CD8-positive, alpha-beta T cell (primary cell): ENCODE measurements at regions of chr12 and their contacts with region 1.

Region 1: GRCh38 chr12:11040162-11040561 is 9.0 kb upstream of the TAS2R31 start:
- DNase-seq: no peak
- ATAC-seq: no peak
- H3K4me3 ChIP-seq: no peak overlapping the region
- H3K4me3 Mint-ChIP-seq: no peak overlapping the region
- H3K27ac ChIP-seq: no peak overlapping the region
- H3K27ac Mint-ChIP-seq: no peak overlapping the region
- H3K4me1 ChIP-seq: no peaks in the 10 kb centered on the region
- H3K4me1 Mint-ChIP-seq: peaks cover 11% of the 10 kb centered on the region
- H3K27me3 ChIP-seq: no peaks in the 10 kb centered on the region
- H3K27me3 Mint-ChIP-seq: no peaks in the 10 kb centered on the region
- CTCF ChIP-seq: no peak

Region 2: DNA sequence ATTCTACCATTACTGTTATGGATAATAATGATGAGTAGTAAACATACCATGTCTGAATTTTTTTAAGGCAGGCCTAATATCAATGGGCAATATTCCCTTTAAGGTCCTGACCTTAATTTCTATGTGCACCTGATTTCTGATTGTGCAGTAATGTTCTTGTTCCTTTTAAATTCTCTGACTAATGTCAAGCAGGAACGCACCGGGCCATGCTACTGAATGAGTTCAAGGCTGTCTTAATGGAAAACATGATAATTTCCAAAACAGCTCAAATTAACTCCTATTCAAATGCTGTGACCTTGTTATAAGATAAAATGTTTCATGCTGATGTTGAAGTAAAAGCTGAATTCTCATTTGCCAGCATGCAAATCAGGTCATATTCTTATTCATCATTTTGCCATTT is 15.1 kb after region 1 on chr12:
- CTCF ChIA-PET with region 1: no interaction called
- POLR2A ChIA-PET with region 1: no interaction called
- intact Hi-C with region 1: no loop called
- DNase-seq: no peak
- ATAC-seq: no peak
- H3K4me3 ChIP-seq: no peak overlapping the region
- H3K4me3 Mint-ChIP-seq: no peak overlapping the region
- H3K27ac ChIP-seq: no peak overlapping the region
- H3K27ac Mint-ChIP-seq: no peak overlapping the region
- H3K4me1 ChIP-seq: no peaks in the 10 kb centered on the region
- H3K4me1 Mint-ChIP-seq: no peaks in the 10 kb centered on the region
- H3K27me3 ChIP-seq: no peaks in the 10 kb centered on the region
- H3K27me3 Mint-ChIP-seq: no peaks in the 10 kb centered on the region
- CTCF ChIP-seq: no peak

Region 3: GRCh38 chr12:11067514-11067913 is 27.4 kb after region 1 on chr12:
- CTCF ChIA-PET with region 1: no interaction called
- POLR2A ChIA-PET with region 1: no interaction called
- intact Hi-C with region 1: loop called (anchors 1 to 2 kb)
- DNase-seq: no peak
- ATAC-seq: no peak
- H3K4me3 ChIP-seq: no peak overlapping the region
- H3K4me3 Mint-ChIP-seq: no peak overlapping the region
- H3K27ac ChIP-seq: no peak overlapping the region
- H3K27ac Mint-ChIP-seq: no peak overlapping the region
- H3K4me1 ChIP-seq: no peaks in the 10 kb centered on the region
- H3K4me1 Mint-ChIP-seq: peaks cover 14% of the 10 kb centered on the region
- H3K27me3 ChIP-seq: no peaks in the 10 kb centered on the region
- H3K27me3 Mint-ChIP-seq: no peaks in the 10 kb centered on the region
- CTCF ChIP-seq: no peak

Region 4: GRCh38 chr12:11092128-11092527 is 52.0 kb after region 1 on chr12 and contains the start of gene TAS2R43:
- CTCF ChIA-PET with region 1: no interaction called
- POLR2A ChIA-PET with region 1: no interaction called
- intact Hi-C with region 1: loop called (anchors 2 kb)
- DNase-seq: no peak
- ATAC-seq: no peak
- H3K4me3 ChIP-seq: no peak within 1 kb of the TSS
- H3K4me3 Mint-ChIP-seq: no peak within 1 kb of the TSS
- H3K27ac ChIP-seq: no peak within 1 kb of the TSS
- H3K27ac Mint-ChIP-seq: no peak within 1 kb of the TSS
- H3K4me1 ChIP-seq: no peaks in the 10 kb centered on the region
- H3K4me1 Mint-ChIP-seq: no peaks in the 10 kb centered on the region
- H3K27me3 ChIP-seq: no peaks in the 10 kb centered on the region
- H3K27me3 Mint-ChIP-seq: no peaks in the 10 kb centered on the region
- CTCF ChIP-seq: no peak
- total RNA-seq, gene TAS2R43: 0.30 TPM in 1 of 2 experiments, not detected in the other

Region 5: DNA sequence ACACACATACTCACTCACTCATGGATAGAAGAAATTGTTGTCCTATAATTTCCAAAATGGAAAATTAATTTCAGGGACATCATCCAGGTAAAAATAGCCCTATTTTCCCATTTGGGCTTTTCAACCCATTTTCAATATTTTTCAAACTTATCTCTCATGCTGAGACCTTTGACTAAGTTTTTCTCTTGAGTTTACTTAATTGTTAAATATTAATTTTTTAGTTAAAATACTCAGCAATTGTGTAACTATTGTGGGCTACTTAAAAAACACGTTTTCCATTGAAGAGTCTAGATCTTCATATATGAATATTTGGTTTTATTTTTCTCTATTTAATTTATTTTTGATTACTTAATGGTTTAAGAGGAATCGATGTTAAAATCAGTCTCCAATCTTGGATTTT is 66.1 kb after region 1 on chr12:
- CTCF ChIA-PET with region 1: no interaction called
- POLR2A ChIA-PET with region 1: no interaction called
- intact Hi-C with region 1: no loop called
- DNase-seq: no peak
- ATAC-seq: no peak
- H3K4me3 ChIP-seq: no peak overlapping the region
- H3K4me3 Mint-ChIP-seq: no peak overlapping the region
- H3K27ac ChIP-seq: no peak overlapping the region
- H3K27ac Mint-ChIP-seq: no peak overlapping the region
- H3K4me1 ChIP-seq: peaks cover 7% of the 10 kb centered on the region
- H3K4me1 Mint-ChIP-seq: peaks cover 34% of the 10 kb centered on the region
- H3K27me3 ChIP-seq: no peaks in the 10 kb centered on the region
- H3K27me3 Mint-ChIP-seq: no peaks in the 10 kb centered on the region
- CTCF ChIP-seq: no peak